ENCODE measurements at regions of chr11 and their contacts with region 1.

Region 1: GRCh38 chr11:68843703-68844312 is 2.1 kb upstream of the CPT1A start:
- DNase-seq: peak; percentile 79
- ATAC-seq: peak; percentile 45 to 53

Region 2: GRCh38 chr11:68775951-68776388 is 67.8 kb before region 1 on chr11:
- intact Hi-C with region 1: loop called in 1 of 2 experiments (anchors 5 kb)
- DNase-seq: no peak
- ATAC-seq: no peak

Measured in left cardiac atrium (tissue), 4 donors.